Activated naive CD4-positive, alpha-beta T cell treated with anti-CD3 and anti-CD28 coated beads for 36 hours (primary cell): ENCODE measurements at regions of chr11 and their contacts with region 1.

Region 1: GRCh38 chr11:73141848-73142286 is 251 bp downstream of the FCHSD2 start:
- DNase-seq: peak; percentile 64
- H3K4me3 Mint-ChIP-seq: peak overlapping the region; percentile 96
- H3K27ac Mint-ChIP-seq: peak overlapping the region; percentile 92
- H3K4me1 Mint-ChIP-seq: peaks cover 42% of the 10 kb centered on the region
- H3K27me3 Mint-ChIP-seq: no peaks in the 10 kb centered on the region

Region 2: GRCh38 chr11:72924568-72925190 is 217.2 kb before region 1 on chr11:
- CTCF ChIA-PET with region 1: interaction called, 3 read pairs
- intact Hi-C with region 1: loop called (anchors 1 kb)
- DNase-seq: no peak
- H3K4me3 Mint-ChIP-seq: no peak overlapping the region
- H3K27ac Mint-ChIP-seq: no peak overlapping the region
- H3K4me1 Mint-ChIP-seq: peaks cover 6% of the 10 kb centered on the region
- H3K27me3 Mint-ChIP-seq: no peaks in the 10 kb centered on the region

Region 3: GRCh38 chr11:73034777-73035176 is 107.1 kb before region 1 on chr11:
- CTCF ChIA-PET with region 1: interaction called, 3 read pairs
- intact Hi-C with region 1: loop called (anchors 1 kb)
- DNase-seq: peak; percentile 28
- H3K4me3 Mint-ChIP-seq: peak overlapping the region; percentile 15
- H3K27ac Mint-ChIP-seq: peak overlapping the region; percentile 72
- H3K4me1 Mint-ChIP-seq: peaks cover 34% of the 10 kb centered on the region
- H3K27me3 Mint-ChIP-seq: no peaks in the 10 kb centered on the region

Region 4: DNA sequence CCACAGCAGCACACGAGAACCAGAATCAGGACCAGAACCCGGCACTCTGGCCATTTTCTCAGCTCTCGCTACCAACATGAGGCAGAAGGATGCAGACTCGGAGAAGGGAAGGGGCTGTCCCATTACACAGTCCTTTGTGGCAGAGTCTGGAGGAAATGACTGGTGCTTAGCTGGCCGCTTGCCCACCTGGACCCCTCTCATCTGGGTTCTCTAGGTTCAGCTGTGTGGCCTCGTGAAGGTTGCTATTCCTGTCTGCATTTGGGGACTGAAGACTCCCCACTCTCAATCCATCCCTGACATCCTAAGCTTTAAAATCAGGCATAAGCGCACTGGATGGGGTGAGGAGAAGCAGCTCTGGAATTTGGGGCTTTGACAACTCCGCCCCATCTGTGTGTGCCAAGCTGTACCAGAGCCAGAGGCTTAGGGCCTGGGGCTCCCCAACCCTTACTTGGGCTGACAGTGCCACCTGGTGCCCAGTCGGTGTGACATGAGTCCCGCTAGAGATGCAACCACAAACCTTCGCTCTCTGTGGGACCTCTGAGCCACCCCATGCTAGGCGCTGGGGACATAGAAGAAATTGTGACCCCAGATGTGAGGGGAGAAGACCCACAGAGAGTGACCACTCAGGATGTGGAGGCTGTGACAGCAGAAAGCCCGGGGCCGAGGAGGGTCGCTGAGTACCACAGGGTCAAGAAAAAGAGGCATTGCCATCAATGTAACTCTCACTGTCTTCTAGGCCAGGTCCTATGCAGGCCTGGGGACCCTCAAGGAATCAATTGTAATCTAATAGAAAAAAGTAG is 36.1 kb after region 1 on chr11:
- CTCF ChIA-PET with region 1: interaction called, 25 read pairs
- intact Hi-C with region 1: loop called (anchors 1 kb)
- DNase-seq: peak; percentile 90
- H3K4me3 Mint-ChIP-seq: no peak overlapping the region
- H3K27ac Mint-ChIP-seq: no peak overlapping the region
- H3K4me1 Mint-ChIP-seq: no peaks in the 10 kb centered on the region
- H3K27me3 Mint-ChIP-seq: no peaks in the 10 kb centered on the region